Heart left ventricle (tissue), 16 donors: ENCODE measurements at regions of chr7 and their contacts with region 1.

Region 1: DNA sequence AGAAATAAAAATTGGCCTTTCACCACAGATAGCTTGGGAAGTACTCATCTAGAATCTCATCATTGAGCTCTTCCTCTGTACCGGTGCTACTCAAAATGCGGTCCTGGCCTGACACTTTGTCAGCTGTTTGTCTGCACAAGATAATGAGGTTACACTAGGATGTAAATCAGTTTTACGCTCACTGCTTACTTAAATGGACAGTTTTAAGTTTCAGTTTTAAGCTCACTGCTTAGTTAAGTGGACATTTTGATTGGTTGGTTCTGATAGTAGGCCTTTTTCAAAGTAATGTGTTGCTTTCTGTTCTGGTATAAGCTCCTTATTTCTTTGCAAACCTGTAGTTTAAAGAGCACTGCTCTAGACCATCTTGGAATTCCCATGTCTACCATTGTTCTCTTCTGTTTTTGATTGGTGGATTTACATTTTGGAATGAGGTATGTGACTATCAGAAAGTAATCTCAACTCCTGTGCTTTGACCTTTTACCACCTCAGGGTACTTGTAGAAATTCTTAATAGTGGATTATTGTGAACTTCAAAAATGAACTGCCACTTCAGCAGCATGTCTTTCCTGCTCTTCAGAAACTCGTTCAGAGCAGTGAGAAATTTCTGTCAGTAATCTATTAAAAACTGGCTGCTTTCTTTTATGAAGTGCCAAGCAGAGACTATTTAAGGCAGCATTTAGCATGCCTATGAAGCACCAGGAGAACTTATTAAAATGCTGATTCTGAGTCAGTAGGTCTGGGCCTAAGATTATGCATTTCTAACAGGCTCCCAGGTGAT is 55.0 kb downstream of the C1GALT1 start:
- DNase-seq: no peak
- ATAC-seq: no peak
- H3K4me3 ChIP-seq: no peak overlapping the region
- H3K27ac ChIP-seq: no peak overlapping the region
- H3K4me1 ChIP-seq: peaks cover 0 to 11% (median 0%) of the 10 kb centered on the region in 12 donors
- H3K27me3 ChIP-seq: no peaks in the 10 kb centered on the region
- CTCF ChIP-seq: no peak
- POLR2A ChIP-seq: no peak

Region 2: GRCh38 chr7:7176421-7177043 is 60.9 kb before region 1 on chr7:
- intact Hi-C with region 1: loop called in 1 of 10 experiments (anchors 10 kb)
- DNase-seq: no peak
- ATAC-seq: peak in 3 of 4 donors; percentile 71 to 79 (median 71)
- H3K4me3 ChIP-seq: no peak overlapping the region
- H3K27ac ChIP-seq: peak overlapping the region in 1 of 12 donors; percentile 53
- H3K4me1 ChIP-seq: peaks cover 0 to 23% (median 4%) of the 10 kb centered on the region in 12 donors
- H3K27me3 ChIP-seq: no peaks in the 10 kb centered on the region
- CTCF ChIP-seq: no peak
- POLR2A ChIP-seq: no peak

Region 3: GRCh38 chr7:7251742-7252141 is 14.4 kb after region 1 on chr7:
- intact Hi-C with region 1: loop called in 1 of 10 experiments (anchors 2 kb)
- DNase-seq: no peak
- ATAC-seq: peak in 3 of 4 donors; percentile 26 to 54 (median 33)
- H3K4me3 ChIP-seq: no peak overlapping the region
- H3K27ac ChIP-seq: peak overlapping the region in 1 of 12 donors; percentile 63
- H3K4me1 ChIP-seq: peaks cover 0 to 35% (median 0%) of the 10 kb centered on the region in 12 donors
- H3K27me3 ChIP-seq: no peaks in the 10 kb centered on the region
- CTCF ChIP-seq: no peak
- POLR2A ChIP-seq: no peak